Tibial artery (tissue), 4 donors: ENCODE measurements at regions of chr16 and their contacts with region 1.

Region 1: DNA sequence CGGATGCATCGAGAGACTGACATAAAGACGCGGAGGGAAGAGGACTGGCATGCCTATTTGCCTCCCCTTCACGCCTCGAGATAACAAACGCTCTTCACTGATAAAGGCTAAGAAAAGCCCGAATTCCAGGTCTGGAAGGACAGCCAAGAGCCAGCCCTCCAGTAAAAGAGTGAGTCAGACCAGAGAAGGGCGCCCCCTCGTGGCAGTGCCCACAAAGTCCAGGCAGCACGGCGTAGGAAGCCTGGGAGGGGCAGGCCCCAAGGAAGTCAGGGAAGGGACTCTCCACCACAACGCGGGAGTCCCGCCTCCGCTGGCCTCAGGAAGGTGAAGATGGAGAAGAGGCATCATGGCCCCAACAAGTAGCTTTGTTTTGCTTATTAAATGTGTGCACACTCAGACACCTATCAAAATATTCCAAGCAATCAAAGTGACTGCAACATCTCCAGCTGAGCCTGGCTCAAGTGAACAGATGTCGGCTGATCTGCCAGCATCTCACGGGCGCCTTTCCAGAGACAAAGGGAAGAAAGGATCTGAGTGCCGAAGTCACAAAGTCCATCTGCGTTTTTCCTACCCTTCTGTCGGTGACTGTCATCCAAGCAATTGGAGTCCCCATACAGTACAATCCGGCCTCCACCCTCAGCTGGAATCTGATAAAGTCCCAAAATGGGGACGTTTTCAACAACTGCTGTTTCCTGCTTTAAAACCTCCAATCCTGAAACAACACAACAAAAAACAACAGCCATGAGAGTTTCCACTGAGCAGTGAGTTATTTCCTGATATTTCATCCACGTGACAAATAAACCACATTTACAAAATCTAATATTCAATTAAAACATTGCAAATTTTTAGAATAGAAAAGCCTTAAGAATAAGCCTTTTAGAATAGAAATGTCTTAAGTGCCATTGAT is 20.4 kb upstream of the SLC38A8 start:
- DNase-seq: peak; percentile 75 to 79
- H3K4me3 ChIP-seq: no peak overlapping the region
- H3K27ac ChIP-seq: peak overlapping the region in 1 of 2 donors; percentile 3
- H3K4me1 ChIP-seq: no peaks in the 10 kb centered on the region
- H3K27me3 ChIP-seq: no peaks in the 10 kb centered on the region
- CTCF ChIP-seq: peak; percentile 74 to 76

Region 2: DNA sequence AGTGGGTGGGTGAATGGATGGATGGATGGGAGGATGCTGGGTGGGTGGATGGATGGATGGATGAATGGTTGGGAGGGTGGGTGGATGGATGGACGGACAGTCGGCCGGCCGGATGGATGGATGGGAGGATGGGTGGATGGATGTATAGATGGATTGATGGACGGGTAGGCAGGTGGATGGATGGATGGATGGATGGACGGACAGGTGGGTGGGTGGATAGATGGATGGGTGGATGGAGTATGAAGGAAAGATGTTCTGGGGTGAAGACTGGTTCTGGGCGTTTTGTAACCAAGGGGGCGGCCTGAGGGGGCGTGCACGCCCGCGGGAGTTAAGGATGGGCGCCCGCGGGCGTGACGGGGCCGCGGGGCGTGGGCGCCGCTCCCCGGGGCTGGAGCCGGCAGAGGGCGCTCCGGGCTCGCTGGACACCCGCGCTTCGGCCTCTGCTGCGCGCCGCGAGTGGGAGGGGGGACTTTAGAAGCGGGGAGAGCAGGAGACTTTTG is 95.1 kb before region 1 on chr16 and contains the start of gene NECAB2:
- intact Hi-C with region 1: loop called (anchors 5 kb)
- DNase-seq: no peak
- H3K4me3 ChIP-seq: peak within 1 kb of the TSS; percentile 31 to 44
- H3K27ac ChIP-seq: no peak within 1 kb of the TSS
- H3K4me1 ChIP-seq: peaks cover 0 to 23% (median 13%) of the 10 kb centered on the region in 4 donors
- H3K27me3 ChIP-seq: peaks cover 0 to 24% of the 10 kb centered on the region in 2 donors
- CTCF ChIP-seq: peak; percentile 29 to 64